WTC11 (cell line): ENCODE measurements at regions of chr16 and their contacts with region 1.

Region 1: DNA sequence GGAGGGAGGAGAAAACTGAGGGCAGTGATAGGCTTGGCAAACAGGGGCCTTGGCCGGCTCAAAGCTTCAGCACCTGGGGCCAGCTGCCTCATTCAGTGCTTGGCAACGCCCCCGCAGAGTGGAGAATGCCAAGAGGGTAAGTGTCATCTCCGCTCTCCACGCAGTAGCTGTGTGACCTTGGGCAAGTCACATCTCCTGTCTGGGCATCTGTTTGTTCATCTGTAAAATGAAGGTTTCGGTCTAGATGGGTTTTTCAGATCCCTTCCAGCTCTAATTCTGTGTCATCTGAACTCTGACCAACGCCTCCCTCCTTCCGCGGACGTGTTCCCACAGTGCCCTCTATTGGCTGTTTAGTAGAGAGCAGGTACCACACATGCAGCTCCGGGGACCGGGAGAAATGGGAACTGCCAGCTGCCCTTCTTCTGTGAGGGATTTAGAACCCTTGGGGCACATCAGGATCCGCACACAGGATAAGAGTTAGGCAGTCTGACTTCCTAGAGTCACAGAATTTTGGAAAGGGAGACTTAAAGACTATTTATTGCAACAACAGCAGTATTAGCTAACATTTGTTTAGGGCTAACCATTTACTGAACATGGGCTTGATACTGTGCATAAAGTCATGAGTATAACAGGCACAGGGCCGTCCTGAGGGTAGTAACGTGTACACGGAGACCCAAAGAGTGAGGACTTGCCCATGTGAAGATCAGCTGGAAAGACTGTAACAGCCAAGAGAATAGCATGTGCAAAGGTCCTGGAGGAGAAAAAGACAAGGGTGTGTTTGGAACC is 26.8 kb downstream of the GP2 start:
- DNase-seq: peak; percentile 64
- ATAC-seq: peak; percentile 97
- H3K4me3 Mint-ChIP-seq: no peak overlapping the region
- H3K27ac Mint-ChIP-seq: no peak overlapping the region
- H3K4me1 Mint-ChIP-seq: 0 out of 2 replicates have a peak, but pooled peaks cover 3% of the 10 kb centered on the region
- H3K27me3 Mint-ChIP-seq: no peaks in the 10 kb centered on the region
- CTCF ChIP-seq: peak; percentile 66

Region 2: DNA sequence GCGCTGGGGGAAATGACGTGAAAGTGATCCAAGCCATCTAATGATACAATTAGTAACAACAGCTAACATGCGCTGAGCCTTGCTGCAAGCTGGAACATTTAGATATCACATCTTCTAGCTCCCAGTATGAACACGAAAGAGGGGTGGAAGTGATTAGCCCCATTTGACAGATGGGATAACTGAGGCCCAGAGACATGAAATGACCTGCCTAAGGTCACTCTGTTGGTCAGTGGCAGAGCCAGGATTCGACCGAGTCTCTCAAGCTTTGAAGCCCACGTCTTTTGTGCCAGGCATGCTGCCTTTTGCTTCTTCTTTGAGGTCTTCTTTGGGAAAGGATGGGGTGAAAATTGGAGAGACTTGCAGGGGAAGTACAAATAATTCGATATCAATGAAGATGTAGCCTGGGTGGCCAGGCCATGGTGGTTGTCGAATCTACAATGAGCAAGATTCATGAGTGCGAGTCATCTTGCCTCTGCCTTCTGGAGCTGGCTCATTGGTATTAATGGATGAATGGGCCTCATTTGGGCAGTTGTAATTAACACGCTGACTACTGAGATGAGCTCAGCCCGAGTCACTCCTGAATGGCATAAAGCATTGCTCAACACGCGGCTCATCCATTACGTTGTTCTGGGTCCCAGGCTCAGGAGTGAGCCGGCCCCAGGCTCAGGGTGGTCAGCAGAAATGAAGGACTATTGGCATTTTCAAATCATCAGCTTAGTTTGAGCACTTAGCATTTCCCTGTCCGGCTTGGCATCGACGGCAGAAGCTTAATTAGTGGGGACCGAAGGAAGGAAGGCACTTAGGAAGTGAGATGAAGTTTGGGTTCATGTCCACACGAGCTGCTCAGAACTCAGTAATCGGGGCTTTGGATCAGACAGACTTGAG is 387.8 kb before region 1 on chr16:
- CTCF ChIA-PET with region 1: interaction called, 215 read pairs
- POLR2A ChIA-PET with region 1: interaction called, 7 read pairs
- DNase-seq: no peak
- ATAC-seq: no peak
- H3K4me3 Mint-ChIP-seq: no peak overlapping the region
- H3K27ac Mint-ChIP-seq: no peak overlapping the region
- H3K4me1 Mint-ChIP-seq: peaks cover 18% of the 10 kb centered on the region
- H3K27me3 Mint-ChIP-seq: no peaks in the 10 kb centered on the region; the same call in 1 of the 2 replicates
- CTCF ChIP-seq: no peak

Region 3: DNA sequence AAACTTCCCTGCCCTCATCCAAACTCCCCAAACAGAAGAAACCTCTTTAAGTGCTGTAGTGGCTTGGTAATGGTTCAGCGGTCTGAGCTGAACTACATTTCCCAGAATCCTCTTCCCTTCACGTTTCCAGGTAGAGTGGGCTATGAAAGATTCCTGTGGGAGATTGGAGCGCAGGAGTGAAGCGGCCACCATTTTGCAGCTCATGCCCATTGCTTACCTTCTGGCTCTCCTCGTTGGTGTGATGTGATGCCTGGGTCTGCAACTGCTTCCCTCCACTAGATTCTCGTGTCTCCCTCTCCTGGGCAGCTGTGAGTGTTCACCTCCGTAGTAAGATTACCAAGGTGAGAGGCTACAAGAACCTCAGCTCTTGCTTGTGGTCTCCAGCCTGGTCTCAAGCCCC is 308.9 kb before region 1 on chr16:
- CTCF ChIA-PET with region 1: interaction called, 10 read pairs
- POLR2A ChIA-PET with region 1: no interaction called
- DNase-seq: peak; percentile 17
- ATAC-seq: peak; percentile 74
- H3K4me3 Mint-ChIP-seq: peak overlapping the region; percentile 4; the same call in 1 of the 2 replicates
- H3K27ac Mint-ChIP-seq: no peak overlapping the region
- H3K4me1 Mint-ChIP-seq: peaks cover 13% of the 10 kb centered on the region
- H3K27me3 Mint-ChIP-seq: no peaks in the 10 kb centered on the region; the same call in 1 of the 2 replicates
- CTCF ChIP-seq: no peak

Region 4: GRCh38 chr16:20094157-20094556 is 206.3 kb before region 1 on chr16:
- CTCF ChIA-PET with region 1: interaction called, 13 read pairs
- POLR2A ChIA-PET with region 1: no interaction called
- DNase-seq: no peak
- ATAC-seq: no peak; the same call in 1 of the 2 replicates
- H3K4me3 Mint-ChIP-seq: no peak overlapping the region
- H3K27ac Mint-ChIP-seq: no peak overlapping the region
- H3K4me1 Mint-ChIP-seq: peaks cover 3% of the 10 kb centered on the region
- H3K27me3 Mint-ChIP-seq: no peaks in the 10 kb centered on the region
- CTCF ChIP-seq: no peak

Region 5: GRCh38 chr16:20225228-20225739 is 75.2 kb before region 1 on chr16:
- CTCF ChIA-PET with region 1: no interaction called
- POLR2A ChIA-PET with region 1: no interaction called
- DNase-seq: no peak
- ATAC-seq: no peak
- H3K4me3 Mint-ChIP-seq: no peak overlapping the region
- H3K27ac Mint-ChIP-seq: no peak overlapping the region
- H3K4me1 Mint-ChIP-seq: peaks cover 14% of the 10 kb centered on the region
- H3K27me3 Mint-ChIP-seq: peaks cover 3% of the 10 kb centered on the region; the same call in 1 of the 2 replicates
- CTCF ChIP-seq: no peak

Region 6: DNA sequence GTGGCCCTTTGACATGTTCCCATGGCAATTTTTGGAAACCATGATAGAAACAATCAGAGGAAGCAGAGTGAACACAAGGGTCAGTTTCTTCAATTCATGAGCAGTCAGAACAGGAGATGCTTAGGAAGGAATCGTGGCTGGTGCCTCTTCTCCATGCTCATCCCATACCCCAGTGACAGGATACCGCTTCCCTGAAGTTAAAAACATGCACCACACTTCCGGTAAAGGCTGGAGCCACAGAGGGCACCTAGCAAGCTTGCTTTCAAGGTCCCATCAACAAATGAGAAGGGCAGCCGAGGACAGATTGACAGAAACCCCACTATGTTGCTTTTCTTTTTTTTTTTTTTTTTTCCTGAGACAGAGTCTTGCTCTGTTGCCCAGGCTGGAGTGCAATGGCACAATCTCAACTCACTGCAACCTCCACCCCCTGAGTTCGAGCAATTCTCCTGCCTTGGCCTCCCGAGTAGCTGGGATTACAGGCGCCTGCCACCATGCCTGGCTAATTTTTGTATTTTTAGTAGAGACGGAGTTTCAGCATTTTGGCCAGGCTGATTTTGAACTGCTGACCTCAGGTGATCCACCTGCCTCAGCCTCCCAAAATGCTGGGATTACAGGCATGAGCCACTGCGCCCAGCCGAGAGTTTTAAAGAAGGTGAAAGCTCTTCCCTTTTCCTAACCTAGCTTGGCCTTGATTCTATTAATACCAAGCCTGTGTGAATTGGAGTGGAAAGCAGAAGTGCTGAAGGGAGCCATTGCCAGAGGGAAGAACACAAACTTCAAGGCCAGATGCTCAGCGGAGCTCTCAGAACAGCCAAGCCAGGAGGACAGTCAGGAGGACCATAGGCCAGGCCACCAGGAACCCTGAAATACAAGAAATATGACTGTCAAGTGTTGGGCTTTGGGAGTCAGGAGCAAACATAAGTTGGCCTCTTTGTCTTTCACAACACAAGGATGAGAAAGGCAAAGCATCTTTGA is 10.2 kb after region 1 on chr16:
- CTCF ChIA-PET with region 1: interaction called, 16 read pairs
- POLR2A ChIA-PET with region 1: no interaction called
- DNase-seq: no peak
- ATAC-seq: no peak
- H3K4me3 Mint-ChIP-seq: no peak overlapping the region
- H3K27ac Mint-ChIP-seq: no peak overlapping the region
- H3K4me1 Mint-ChIP-seq: peaks cover 10% of the 10 kb centered on the region
- H3K27me3 Mint-ChIP-seq: no peaks in the 10 kb centered on the region
- CTCF ChIP-seq: no peak

Region 7: GRCh38 chr16:20323677-20324076 is 23.2 kb after region 1 on chr16:
- CTCF ChIA-PET with region 1: no interaction called
- POLR2A ChIA-PET with region 1: no interaction called
- DNase-seq: peak; percentile 20
- ATAC-seq: peak; percentile 80
- H3K4me3 Mint-ChIP-seq: no peak overlapping the region
- H3K27ac Mint-ChIP-seq: no peak overlapping the region
- H3K4me1 Mint-ChIP-seq: peaks cover 5% of the 10 kb centered on the region; the same call in 1 of the 2 replicates
- H3K27me3 Mint-ChIP-seq: no peaks in the 10 kb centered on the region
- CTCF ChIP-seq: no peak

Region 8: GRCh38 chr16:20409398-20410120 is 109.1 kb after region 1 on chr16 and contains the start of gene ACSM5:
- CTCF ChIA-PET with region 1: no interaction called
- POLR2A ChIA-PET with region 1: no interaction called
- DNase-seq: no peak
- ATAC-seq: no peak
- H3K4me3 Mint-ChIP-seq: no peak within 1 kb of the TSS
- H3K27ac Mint-ChIP-seq: no peak within 1 kb of the TSS
- H3K4me1 Mint-ChIP-seq: peaks cover 5% of the 10 kb centered on the region; the same call in 1 of the 2 replicates
- H3K27me3 Mint-ChIP-seq: no peaks in the 10 kb centered on the region
- CTCF ChIP-seq: no peak
- total RNA-seq, gene ACSM5: 0.16 to 0.17 TPM in 2 of 3 replicates, not detected in the other

Region 9: GRCh38 chr16:20538181-20538580 is 237.7 kb after region 1 on chr16:
- CTCF ChIA-PET with region 1: no interaction called
- POLR2A ChIA-PET with region 1: no interaction called
- DNase-seq: no peak
- ATAC-seq: no peak
- H3K4me3 Mint-ChIP-seq: no peak overlapping the region
- H3K27ac Mint-ChIP-seq: no peak overlapping the region
- H3K4me1 Mint-ChIP-seq: no peaks in the 10 kb centered on the region
- H3K27me3 Mint-ChIP-seq: no peaks in the 10 kb centered on the region; the same call in 1 of the 2 replicates
- CTCF ChIP-seq: no peak